HCT116 (cell line): ENCODE measurements at regions of chr10 and their contacts with region 1.

Region 1: GRCh38 chr10:51001587-51001986 is 72.7 kb upstream of the PRKG1 start:
- DNase-seq: no peak
- ATAC-seq: peak; percentile 72
- H3K4me3 ChIP-seq: no peak overlapping the region
- H3K27ac ChIP-seq: no peak overlapping the region
- H3K4me1 ChIP-seq: no peaks in the 10 kb centered on the region
- H3K27me3 ChIP-seq: peaks cover 7% of the 10 kb centered on the region
- CTCF ChIP-seq: peak; percentile 37 to 67 (median 48); a peak in 5 of 6 replicates
- POLR2A ChIP-seq: no peak
- RAD21 ChIP-seq: peak; percentile 53

Region 2: GRCh38 chr10:50788951-50789945 is 212.3 kb before region 1 on chr10:
- CTCF ChIA-PET with region 1: no interaction called
- POLR2A ChIA-PET with region 1: no interaction called
- RAD21 ChIA-PET with region 1: no interaction called
- intact Hi-C with region 1: loop called (anchors 5 kb)
- DNase-seq: peak; percentile 51
- ATAC-seq: peak; percentile 98
- H3K4me3 ChIP-seq: no peak overlapping the region
- H3K27ac ChIP-seq: no peak overlapping the region
- H3K4me1 ChIP-seq: no peaks in the 10 kb centered on the region
- H3K27me3 ChIP-seq: no peaks in the 10 kb centered on the region
- CTCF ChIP-seq: peak; percentile 70 to 79 (median 73)
- POLR2A ChIP-seq: no peak
- RAD21 ChIP-seq: peak; percentile 88

Region 3: DNA sequence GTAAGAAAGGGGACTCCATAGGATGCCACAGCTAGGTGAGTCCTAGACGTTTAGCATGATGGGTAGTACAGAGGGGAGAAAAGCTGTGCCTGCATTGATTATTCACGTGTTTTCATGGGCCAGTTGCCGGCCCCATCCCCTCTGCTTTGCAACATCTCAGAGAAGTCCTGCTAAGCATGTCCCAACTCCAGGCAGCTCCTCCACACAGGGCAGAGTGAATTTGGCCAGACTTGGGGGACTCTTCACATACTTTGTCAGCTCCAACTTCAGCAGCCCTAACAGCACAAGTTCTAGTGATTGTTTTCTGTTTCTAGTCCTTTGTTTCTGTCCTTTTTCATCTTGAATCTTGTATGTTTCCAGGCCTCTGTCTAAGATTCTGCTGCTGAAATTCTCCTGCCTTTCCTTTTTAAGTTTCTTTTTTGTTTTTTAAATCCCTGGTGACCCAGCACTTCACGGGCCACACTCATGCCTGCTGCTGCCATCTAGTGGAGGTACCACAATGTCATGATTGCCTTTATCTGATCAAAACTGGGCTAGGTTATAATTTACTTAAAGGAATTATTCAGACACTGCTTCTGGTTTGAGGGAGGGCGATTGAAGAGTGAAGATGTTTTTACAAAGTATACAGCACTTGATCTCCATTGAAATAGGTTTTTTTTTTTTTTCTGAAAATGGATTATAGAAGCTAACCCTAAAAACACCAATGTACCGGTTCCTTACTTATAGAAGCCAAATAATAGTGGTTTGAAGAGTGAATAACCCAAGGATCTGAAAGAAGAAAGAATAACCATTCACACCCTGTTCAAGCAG is 420.9 kb after region 1 on chr10:
- CTCF ChIA-PET with region 1: no interaction called
- POLR2A ChIA-PET with region 1: no interaction called
- RAD21 ChIA-PET with region 1: no interaction called
- intact Hi-C with region 1: loop called (anchors 5 kb)
- DNase-seq: peak; percentile 16
- ATAC-seq: peak; percentile 81
- H3K4me3 ChIP-seq: no peak overlapping the region
- H3K27ac ChIP-seq: no peak overlapping the region
- H3K4me1 ChIP-seq: no peaks in the 10 kb centered on the region
- H3K27me3 ChIP-seq: 0 out of 2 replicates have a peak, but pooled peaks cover 8% of the 10 kb centered on the region
- CTCF ChIP-seq: peak; percentile 44 to 83 (median 66); a peak in 5 of 6 replicates
- POLR2A ChIP-seq: no peak
- RAD21 ChIP-seq: peak; percentile 60

Region 4: DNA sequence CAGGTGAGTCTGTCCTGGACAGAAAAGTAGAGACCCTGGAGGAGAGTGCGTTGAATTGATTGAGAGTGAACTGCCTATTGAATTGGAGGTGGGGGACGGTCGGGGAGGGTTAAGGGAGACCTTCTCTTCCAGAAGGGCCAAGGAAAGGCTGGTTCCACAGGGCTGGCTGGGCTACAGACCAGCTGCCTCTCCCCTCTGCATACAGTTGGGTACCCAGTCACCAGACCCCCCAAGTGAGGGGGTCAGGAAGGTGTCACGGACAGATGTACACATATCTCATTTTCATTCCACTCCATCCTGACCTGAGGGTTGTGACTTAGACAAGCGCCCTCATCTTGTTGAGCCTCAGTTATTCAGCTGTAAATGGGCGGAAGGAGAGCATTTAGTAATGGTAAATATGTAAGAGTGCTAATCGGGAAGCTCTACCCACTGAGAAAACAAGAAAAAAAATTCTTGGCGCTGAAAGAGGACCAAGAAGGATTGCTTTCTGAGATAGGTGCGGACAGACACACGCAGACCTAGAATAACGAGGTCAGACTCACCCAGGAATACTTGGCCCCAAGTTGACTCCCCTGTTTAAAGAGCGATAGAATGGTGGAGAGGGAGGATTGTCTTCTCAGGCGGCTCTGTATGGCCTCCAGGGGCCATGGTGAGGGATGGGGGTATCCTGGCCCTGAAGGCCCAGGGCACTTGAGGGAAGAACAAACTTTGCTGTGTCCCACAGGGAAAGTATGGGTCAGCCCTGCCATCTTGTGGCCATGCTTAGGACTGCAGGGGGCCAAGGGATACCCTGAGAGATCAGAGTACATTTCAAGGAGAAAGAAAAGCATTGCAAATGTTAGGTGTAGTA is 1778.2 kb after region 1 on chr10:
- CTCF ChIA-PET with region 1: no interaction called
- POLR2A ChIA-PET with region 1: no interaction called
- RAD21 ChIA-PET with region 1: no interaction called
- intact Hi-C with region 1: loop called (anchors 5 kb)
- DNase-seq: peak; percentile 45
- ATAC-seq: peak; percentile 95
- H3K4me3 ChIP-seq: no peak overlapping the region
- H3K27ac ChIP-seq: no peak overlapping the region
- H3K4me1 ChIP-seq: no peaks in the 10 kb centered on the region
- H3K27me3 ChIP-seq: no peaks in the 10 kb centered on the region
- CTCF ChIP-seq: peak; percentile 57 to 93 (median 90); a peak in 5 of 6 replicates
- POLR2A ChIP-seq: no peak
- RAD21 ChIP-seq: peak; percentile 83